ENCODE measurements at regions of chr13 and their contacts with region 1.

Region 1: GRCh38 chr13:110925023-110925612 is 10.2 kb upstream of the ANKRD10 start:
- DNase-seq: no peak
- ATAC-seq: no peak
- H3K4me3 ChIP-seq: no peak overlapping the region
- H3K27ac ChIP-seq: no peak overlapping the region
- H3K4me1 ChIP-seq: peaks cover 0 to 23% (median 2%) of the 10 kb centered on the region in 12 donors
- H3K27me3 ChIP-seq: peaks cover 0 to 2% (median 0%) of the 10 kb centered on the region in 9 donors
- CTCF ChIP-seq: peak in 2 of 12 donors; percentile 23 to 28
- POLR2A ChIP-seq: no peak

Region 2: GRCh38 chr13:110841846-110842245 is 83.3 kb before region 1 on chr13:
- intact Hi-C with region 1: no loop called
- DNase-seq: no peak
- ATAC-seq: no peak
- H3K4me3 ChIP-seq: no peak overlapping the region
- H3K27ac ChIP-seq: no peak overlapping the region
- H3K4me1 ChIP-seq: no peaks in the 10 kb centered on the region
- H3K27me3 ChIP-seq: peaks cover 0 to 31% (median 0%) of the 10 kb centered on the region in 9 donors
- CTCF ChIP-seq: no peak
- POLR2A ChIP-seq: no peak

Region 3: DNA sequence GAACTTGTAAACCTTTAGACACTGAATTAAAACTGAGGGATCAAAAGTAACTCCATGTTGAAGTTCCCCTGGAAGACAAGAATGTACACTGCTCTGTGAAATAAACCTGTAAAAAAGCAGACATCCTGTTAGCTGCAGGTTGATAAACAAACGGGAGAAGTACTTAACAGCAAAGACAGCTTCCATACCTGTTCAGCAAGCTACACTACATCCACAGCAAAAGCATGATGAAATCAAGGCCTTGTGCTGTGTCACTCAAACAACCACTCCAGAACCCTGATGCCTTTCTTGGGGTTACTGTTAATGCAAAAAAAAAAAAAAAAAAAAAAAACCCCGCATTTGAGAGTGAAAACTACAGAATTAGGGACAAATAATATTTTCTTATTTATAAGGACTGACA is 31.0 kb before region 1 on chr13:
- intact Hi-C with region 1: no loop called
- DNase-seq: no peak
- ATAC-seq: no peak
- H3K4me3 ChIP-seq: no peak overlapping the region
- H3K27ac ChIP-seq: no peak overlapping the region
- H3K4me1 ChIP-seq: no peaks in the 10 kb centered on the region
- H3K27me3 ChIP-seq: no peaks in the 10 kb centered on the region
- CTCF ChIP-seq: no peak
- POLR2A ChIP-seq: no peak

Region 4: GRCh38 chr13:110993788-110994187 is 68.7 kb after region 1 on chr13:
- intact Hi-C with region 1: no loop called
- DNase-seq: no peak
- ATAC-seq: no peak
- H3K4me3 ChIP-seq: no peak overlapping the region
- H3K27ac ChIP-seq: no peak overlapping the region
- H3K4me1 ChIP-seq: no peaks in the 10 kb centered on the region
- H3K27me3 ChIP-seq: peaks cover 0 to 2% (median 0%) of the 10 kb centered on the region in 9 donors
- CTCF ChIP-seq: no peak
- POLR2A ChIP-seq: no peak

Region 5: DNA sequence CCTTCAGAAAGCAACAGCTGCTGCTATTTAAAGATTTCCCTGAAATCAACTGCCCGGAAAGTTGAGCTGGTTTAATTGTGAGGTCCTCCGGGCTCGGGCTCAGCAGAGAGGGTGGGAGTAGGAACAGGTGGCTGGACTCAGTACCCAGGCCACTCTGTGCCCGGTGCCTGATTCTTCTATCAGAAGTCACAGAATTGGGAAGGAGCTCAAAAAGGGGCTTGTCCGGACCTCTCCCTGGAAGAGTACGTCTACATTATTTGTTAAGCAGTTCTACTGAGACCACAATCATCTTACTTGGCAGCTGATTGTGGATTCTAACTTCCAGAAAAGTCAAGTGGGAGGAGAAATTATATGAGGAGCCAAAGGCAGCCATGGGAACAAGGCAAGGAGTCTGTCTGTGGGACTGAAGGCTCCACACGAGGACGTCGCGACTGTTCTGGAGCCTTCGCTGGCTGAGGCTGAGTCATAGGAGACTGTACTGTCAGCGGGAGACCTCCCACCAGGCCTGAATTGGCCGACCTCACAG is 81.5 kb after region 1 on chr13:
- intact Hi-C with region 1: loop called in 1 of 10 experiments (anchors 10 kb)
- DNase-seq: peak; percentile 84 to 92 (median 88)
- ATAC-seq: peak; percentile 93 to 97 (median 96)
- H3K4me3 ChIP-seq: peak overlapping the region in 4 of 12 donors; percentile 1 to 15 (median 5)
- H3K27ac ChIP-seq: peak overlapping the region; percentile 70 to 93 (median 88)
- H3K4me1 ChIP-seq: peaks cover 3 to 37% (median 23%) of the 10 kb centered on the region in 12 donors
- H3K27me3 ChIP-seq: no peaks in the 10 kb centered on the region
- CTCF ChIP-seq: no peak
- POLR2A ChIP-seq: no peak

Region 6: DNA sequence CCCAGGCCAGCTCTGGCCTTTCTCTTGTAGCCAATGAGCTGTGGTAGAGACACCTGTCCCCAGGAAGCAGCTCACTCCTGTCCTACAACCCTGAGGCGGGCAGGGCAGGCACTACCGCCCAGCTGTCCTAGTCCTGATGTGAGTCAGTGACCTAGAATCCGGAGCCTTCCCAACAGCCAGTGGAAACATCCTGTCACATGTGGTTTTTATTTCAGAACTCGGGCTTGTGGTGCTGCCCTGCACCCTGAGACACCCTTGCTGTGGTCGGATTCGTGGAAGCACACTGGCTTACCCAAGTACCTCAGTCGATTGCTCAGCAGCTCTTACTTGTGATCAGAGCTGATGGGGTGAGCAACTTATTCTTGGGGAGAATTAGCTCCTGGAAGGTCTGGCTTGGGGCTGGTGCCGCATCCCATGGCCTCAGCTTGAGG is 106.4 kb after region 1 on chr13:
- intact Hi-C with region 1: no loop called
- DNase-seq: no peak
- ATAC-seq: peak in 3 of 4 donors; percentile 34 to 49 (median 36)
- H3K4me3 ChIP-seq: no peak overlapping the region
- H3K27ac ChIP-seq: no peak overlapping the region
- H3K4me1 ChIP-seq: no peaks in the 10 kb centered on the region
- H3K27me3 ChIP-seq: no peaks in the 10 kb centered on the region
- CTCF ChIP-seq: no peak
- POLR2A ChIP-seq: no peak

Measured in heart left ventricle (tissue), 16 donors.